ENCODE measurements at regions of chr9 and their contacts with region 1.

Region 1: DNA sequence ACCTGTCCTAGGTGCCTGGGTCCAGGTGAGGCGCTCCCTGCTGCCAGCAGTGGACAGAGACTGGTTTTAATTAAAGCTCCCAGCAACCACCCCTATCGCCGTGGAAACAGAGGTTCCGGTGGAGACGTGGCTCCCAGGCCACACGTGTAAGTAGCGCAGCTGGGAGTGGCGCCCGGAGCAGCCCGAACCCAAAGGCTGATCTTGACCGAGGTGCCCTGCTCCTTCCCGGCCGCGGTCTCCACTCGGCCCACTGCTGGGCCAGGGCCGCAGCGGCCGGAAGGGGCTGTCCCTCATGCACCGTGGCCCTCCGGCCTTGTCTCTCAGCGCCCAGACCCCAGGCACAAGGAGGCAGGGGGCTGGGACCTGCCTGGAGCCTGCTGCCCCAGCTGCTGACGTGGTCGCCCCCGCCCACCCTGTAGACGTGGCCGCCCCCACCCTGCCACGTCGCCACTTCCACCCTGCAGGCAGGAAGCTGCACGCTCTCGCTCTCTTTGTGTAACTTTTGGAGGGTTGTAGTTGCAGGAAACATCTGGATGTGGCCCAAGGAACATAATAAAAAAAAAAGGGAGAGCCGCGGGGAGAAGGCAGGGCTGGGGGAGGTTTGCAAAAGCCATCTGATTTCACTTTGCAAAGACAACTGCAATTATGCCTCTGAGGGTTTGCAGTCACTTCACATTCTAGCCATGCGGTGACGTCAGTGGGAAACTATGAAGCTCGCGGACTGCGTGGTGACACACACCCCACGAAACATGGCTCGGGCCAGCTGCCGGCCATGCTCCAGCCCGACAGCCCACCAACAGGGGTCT is 129.9 kb downstream of the RXRA start:
- DNase-seq: peak; percentile 92 to 95
- H3K4me3 ChIP-seq: peak overlapping the region; percentile 19 to 21
- H3K27ac ChIP-seq: peak overlapping the region; percentile 90 to 94
- H3K4me1 ChIP-seq: peaks cover 10 to 14% of the 10 kb centered on the region in 2 donors
- H3K27me3 ChIP-seq: no peaks in the 10 kb centered on the region
- CTCF ChIP-seq: peak in 1 of 4 experiments; percentile 3
- POLR2A ChIP-seq: peak; percentile 10 to 68

Region 2: GRCh38 chr9:134243778-134244467 is 212.2 kb before region 1 on chr9:
- intact Hi-C with region 1: no loop called
- DNase-seq: no peak
- H3K4me3 ChIP-seq: no peak overlapping the region
- H3K27ac ChIP-seq: no peak overlapping the region
- H3K4me1 ChIP-seq: no peaks in the 10 kb centered on the region
- H3K27me3 ChIP-seq: no peaks in the 10 kb centered on the region
- CTCF ChIP-seq: no peak
- POLR2A ChIP-seq: no peak

Region 3: DNA sequence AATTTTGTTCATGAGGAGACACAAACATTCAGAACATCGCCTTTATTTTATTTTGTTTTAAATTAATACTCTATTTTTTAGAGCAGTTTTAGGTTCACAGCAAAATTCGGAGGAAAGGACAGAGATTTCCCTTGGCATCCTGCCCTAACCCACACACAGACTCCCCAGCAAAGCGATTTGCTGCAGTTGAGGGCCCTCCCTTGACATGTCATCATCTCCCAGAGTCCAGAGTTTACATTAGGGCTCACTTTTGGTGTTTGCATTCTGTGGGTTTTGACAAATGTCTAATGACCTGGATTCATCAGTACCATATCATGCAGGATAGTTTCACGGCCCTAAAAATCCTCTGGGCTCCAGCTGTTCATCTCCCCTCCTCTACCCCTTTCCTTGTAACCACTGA is 151.8 kb after region 1 on chr9:
- intact Hi-C with region 1: no loop called
- DNase-seq: no peak
- H3K4me3 ChIP-seq: no peak overlapping the region
- H3K27ac ChIP-seq: no peak overlapping the region
- H3K4me1 ChIP-seq: no peaks in the 10 kb centered on the region
- H3K27me3 ChIP-seq: no peaks in the 10 kb centered on the region
- CTCF ChIP-seq: no peak
- POLR2A ChIP-seq: no peak

Region 4: GRCh38 chr9:134641173-134641985 is 185.2 kb after region 1 on chr9 and contains the start of gene COL5A1:
- intact Hi-C with region 1: loop called (anchors 10 kb)
- DNase-seq: peak; percentile 92 to 95
- H3K4me3 ChIP-seq: peak within 1 kb of the TSS; percentile 63 to 91
- H3K27ac ChIP-seq: peak within 1 kb of the TSS; percentile 91 to 98
- H3K4me1 ChIP-seq: peaks cover under 1 to 5% of the 10 kb centered on the region in 2 donors
- H3K27me3 ChIP-seq: no peaks in the 10 kb centered on the region
- CTCF ChIP-seq: peak in 2 of 4 experiments; percentile 40 to 69
- POLR2A ChIP-seq: peak in 1 of 2 donors; percentile 96
- total RNA-seq, gene COL5A1: 21.2 to 604 (median 129) TPM